ENCODE measurements at regions of chr3 and their contacts with region 1.

Region 1: DNA sequence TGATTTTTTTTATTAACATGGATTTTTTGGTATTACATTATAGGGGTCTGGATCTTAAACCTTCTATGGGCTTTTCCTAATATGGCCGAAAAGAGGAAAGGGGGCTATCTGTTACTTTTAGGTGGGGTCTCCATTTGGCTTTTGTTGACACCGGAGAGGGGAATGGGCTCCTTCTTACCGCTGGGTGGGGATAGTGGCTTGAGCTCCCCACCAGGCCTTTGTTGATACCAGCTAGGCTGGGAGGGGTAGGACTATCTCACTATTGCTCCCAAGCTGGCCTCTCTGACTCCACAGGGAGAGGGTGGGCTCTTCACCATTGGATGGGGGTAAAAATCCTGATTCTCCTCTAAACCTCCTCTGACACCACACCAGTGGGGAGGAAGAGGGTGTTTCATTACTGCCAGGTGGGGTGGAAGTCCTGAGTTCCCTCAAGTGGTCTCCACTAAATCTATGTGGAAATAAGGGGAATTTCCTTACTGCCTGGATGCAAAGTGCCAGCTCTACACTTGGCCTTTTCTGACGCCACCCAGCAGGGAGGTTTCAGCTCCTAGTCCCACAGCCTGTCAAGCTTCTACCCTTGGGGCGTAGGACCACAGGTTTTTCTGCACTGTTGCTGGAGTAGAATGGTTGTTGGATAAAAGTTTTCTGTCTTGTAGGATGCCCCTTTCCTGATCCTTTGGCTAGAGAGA is 572.3 kb downstream of the MAGI1 start:
- DNase-seq: no peak
- H3K4me3 ChIP-seq: no peak overlapping the region
- H3K27me3 ChIP-seq: no peaks in the 10 kb centered on the region
- CTCF ChIP-seq: no peak

Region 2: DNA sequence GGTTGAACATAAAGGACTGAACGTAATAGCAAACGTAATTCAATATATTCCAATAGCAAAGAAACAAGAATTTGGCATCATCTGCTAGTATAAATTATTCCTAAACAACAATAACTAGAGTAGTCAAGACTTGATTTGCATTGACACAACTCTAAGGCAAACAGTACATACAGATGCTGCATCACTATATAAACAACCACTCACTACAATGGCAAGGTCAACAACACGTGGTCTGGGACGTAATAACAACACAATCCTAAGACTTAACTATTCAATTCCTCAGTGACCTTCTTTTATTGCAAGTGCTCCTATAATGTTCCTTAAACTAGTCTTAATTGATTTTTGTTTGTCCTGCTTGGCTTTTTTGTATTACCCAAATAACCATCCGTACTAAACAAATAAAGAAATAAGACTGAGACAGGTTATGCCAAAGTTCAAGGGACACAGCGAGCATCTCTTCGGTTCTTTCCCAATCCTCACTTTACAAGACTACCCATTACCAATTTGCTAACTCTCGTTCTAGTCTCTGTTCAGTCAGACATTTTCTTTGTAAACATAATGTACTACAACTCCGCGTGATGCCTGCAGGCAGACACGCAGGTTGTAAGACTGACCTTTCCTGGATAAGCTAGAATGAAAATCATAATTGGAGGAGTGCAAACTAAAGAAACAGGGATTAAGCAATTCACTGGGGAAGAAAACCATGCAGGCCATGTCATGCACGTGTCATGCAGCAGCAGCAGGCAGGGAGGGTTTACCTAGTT is 19.0 kb before region 1 on chr3:
- CTCF ChIA-PET with region 1: no interaction called
- POLR2A ChIA-PET with region 1: no interaction called
- DNase-seq: no peak
- H3K4me3 ChIP-seq: no peak overlapping the region
- H3K27me3 ChIP-seq: no peaks in the 10 kb centered on the region
- CTCF ChIP-seq: no peak

Region 3: DNA sequence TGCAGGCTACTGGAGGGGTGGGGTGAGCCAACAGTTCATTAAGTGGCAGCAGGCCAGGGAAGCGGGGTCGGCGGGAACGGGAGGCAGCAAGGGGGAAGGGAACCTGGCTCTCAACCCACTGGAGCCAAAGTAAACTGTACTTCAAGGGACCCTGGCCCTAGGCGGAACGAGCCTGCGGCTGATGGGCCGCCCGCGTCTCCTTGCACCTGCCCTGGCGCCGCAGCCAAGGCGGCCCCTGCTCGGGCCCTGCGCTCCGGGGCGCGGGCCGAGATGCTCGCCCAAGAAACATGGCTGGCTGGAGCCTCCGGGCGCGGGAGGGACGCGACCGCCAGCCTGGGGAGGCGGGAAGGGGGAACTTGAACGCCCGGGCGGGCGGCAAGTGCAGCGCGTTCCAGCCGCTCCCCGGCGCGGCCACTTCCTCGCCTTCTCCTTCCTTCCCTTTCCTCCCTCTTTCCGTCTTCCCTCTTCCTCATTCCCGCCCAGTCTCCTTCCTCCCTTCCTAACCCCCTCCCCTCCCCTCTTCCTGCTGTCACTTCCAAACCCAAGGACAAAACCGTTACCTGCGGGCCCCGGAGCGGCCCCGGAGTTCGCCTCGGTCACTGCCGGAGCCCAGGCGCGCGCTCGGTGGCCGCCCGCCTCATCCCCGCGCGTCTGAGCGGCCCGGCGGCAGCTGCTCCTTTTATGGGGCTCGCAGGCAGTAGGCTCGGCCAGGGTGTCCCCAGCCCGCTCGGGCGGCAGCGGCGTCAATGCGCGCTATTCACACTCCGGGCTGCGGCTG is 82.6 kb after region 1 on chr3:
- CTCF ChIA-PET with region 1: no interaction called
- POLR2A ChIA-PET with region 1: no interaction called
- DNase-seq: no peak
- H3K4me3 ChIP-seq: peak overlapping the region; percentile 58
- H3K27me3 ChIP-seq: no peaks in the 10 kb centered on the region
- CTCF ChIP-seq: no peak

Region 4: GRCh38 chr3:66998113-66998903 is 1531.9 kb after region 1 on chr3 and contains the start of gene KBTBD8:
- CTCF ChIA-PET with region 1: no interaction called
- POLR2A ChIA-PET with region 1: interaction called, 12 read pairs
- DNase-seq: no peak
- H3K4me3 ChIP-seq: peak within 1 kb of the TSS; percentile 70
- H3K27me3 ChIP-seq: no peaks in the 10 kb centered on the region
- CTCF ChIP-seq: no peak
- polyA plus RNA-seq, gene KBTBD8: 0.31 and 0.49 TPM in 2 replicates

Measured in BJ (cell line).